ENCODE measurements at regions of chr4 and their contacts with region 1.

Region 1: GRCh38 chr4:108596344-108596743 is 24.0 kb upstream of the RPL34 start:
- DNase-seq: no peak
- H3K4me3 ChIP-seq: no peak overlapping the region
- H3K27ac ChIP-seq: no peak overlapping the region
- H3K4me1 ChIP-seq: peaks cover 11% of the 10 kb centered on the region
- H3K27me3 ChIP-seq: no peaks in the 10 kb centered on the region
- CTCF ChIP-seq: no peak

Region 2: DNA sequence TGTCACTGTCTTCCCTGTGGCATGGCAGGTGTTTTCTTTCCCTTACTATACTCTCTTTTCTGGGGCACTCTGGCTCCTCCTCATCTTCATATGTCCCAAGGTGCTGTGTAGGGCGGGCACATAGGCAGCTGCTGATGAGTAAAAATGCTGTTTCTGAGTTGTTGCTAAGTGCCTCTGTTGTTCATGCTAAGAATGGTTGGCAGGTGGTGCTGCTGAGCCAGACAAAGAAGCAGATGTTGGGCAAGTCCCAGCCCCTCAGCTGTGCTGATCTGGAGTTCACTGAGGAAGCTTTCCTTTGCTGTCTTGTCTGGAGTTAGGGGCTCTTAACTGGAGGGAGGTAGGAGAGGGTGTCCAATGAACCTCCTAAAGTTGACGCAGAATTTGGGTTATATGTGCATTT is 566.0 kb before region 1 on chr4:
- CTCF ChIA-PET with region 1: no interaction called
- dilution Hi-C with region 1: no loop called
- in situ Hi-C with region 1: loop called in 1 of 2 experiments (anchors 25 kb)
- intact Hi-C with region 1: no loop called
- DNase-seq: peak; percentile 63
- H3K4me3 ChIP-seq: no peak overlapping the region
- H3K27ac ChIP-seq: no peak overlapping the region
- H3K4me1 ChIP-seq: no peaks in the 10 kb centered on the region
- H3K27me3 ChIP-seq: no peaks in the 10 kb centered on the region
- CTCF ChIP-seq: peak; percentile 43 to 63

Measured in mammary epithelial cell (primary cell).